ENCODE measurements at regions of chr5 and their contacts with region 1.

Region 1: GRCh38 chr5:57411982-57412381 is 70.6 kb downstream of the ACTBL2 start:
- DNase-seq: peak; percentile 58
- ATAC-seq: peak; percentile 81
- H3K4me3 ChIP-seq: no peak overlapping the region
- H3K27ac ChIP-seq: peak overlapping the region; percentile 14
- H3K4me1 ChIP-seq: peaks cover 22% of the 10 kb centered on the region
- H3K27me3 ChIP-seq: no peaks in the 10 kb centered on the region
- CTCF ChIP-seq: no peak

Region 2: DNA sequence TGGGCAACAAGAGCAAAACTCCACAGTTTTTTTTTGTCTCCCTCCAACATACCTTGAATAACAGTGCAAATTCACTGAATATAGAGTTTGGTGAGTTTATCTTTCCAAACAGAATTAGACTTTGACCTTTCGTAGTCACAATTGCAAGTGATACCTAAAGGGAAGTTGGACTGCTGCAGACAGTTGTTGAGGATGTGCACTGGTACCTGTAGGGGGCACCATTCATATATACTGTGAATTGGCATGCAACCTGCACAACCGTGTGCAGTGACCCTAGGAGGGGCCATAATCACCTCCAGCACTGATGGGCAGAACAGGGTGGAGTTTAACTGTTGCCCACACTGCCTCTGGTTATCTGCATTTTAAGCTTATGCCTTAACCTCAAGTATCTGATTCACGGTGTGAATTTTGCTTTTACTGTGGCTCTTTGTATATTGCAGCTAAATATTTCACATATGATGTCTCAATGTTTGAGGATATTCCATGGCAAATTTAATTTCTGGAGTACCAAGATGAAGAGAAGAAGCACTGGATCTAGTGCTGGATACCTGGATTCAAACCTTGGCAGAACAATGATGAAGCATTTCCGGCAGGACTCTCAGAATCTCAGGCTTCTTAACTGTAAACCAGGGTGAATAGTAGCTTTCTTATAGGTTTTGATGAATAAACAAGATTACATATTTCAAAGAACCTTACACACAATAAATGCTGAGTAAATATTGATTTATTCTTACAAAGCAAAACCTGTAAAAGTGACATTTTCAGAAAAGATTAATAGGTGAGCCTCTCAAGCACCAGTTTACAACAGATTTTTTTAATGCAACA is 73.7 kb before region 1 on chr5:
- CTCF ChIA-PET with region 1: no interaction called
- POLR2A ChIA-PET with region 1: no interaction called
- intact Hi-C with region 1: loop called (anchors 1 kb)
- DNase-seq: peak; percentile 62
- ATAC-seq: peak; percentile 67
- H3K4me3 ChIP-seq: no peak overlapping the region
- H3K27ac ChIP-seq: peak overlapping the region; percentile 67
- H3K4me1 ChIP-seq: peaks cover 49% of the 10 kb centered on the region
- H3K27me3 ChIP-seq: no peaks in the 10 kb centered on the region
- CTCF ChIP-seq: peak; percentile 59

Measured in PC-3 (cell line).